ENCODE measurements at regions of chr2 and their contacts with region 1.

Region 1: DNA sequence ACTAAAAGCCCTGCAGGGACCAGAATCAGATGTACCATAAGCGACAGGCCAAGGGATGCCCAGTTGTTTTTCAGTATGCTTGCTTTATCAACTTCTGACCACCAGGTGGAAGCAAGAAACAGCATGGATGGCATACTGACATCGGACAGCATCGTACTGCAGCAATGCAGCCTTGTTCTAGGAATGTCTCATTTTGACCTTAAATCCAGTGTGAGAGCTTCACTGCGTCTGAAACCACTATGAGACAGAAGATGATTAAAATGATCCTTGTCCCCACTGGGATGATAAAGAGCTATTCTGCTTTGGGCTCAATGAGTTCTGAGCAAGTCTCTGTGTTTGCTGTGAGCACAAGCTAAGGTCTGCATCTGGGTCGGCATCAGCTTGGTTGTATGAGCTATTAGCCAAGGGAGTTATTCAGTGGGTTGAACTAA is 54.3 kb downstream of the CDK15 start:
- DNase-seq: peak; percentile 65
- H3K4me3 ChIP-seq: no peak overlapping the region
- H3K27ac ChIP-seq: no peak overlapping the region
- H3K4me1 ChIP-seq: peaks cover 19% of the 10 kb centered on the region
- H3K27me3 ChIP-seq: no peaks in the 10 kb centered on the region
- CTCF ChIP-seq: peak; percentile 86 to 92

Region 2: DNA sequence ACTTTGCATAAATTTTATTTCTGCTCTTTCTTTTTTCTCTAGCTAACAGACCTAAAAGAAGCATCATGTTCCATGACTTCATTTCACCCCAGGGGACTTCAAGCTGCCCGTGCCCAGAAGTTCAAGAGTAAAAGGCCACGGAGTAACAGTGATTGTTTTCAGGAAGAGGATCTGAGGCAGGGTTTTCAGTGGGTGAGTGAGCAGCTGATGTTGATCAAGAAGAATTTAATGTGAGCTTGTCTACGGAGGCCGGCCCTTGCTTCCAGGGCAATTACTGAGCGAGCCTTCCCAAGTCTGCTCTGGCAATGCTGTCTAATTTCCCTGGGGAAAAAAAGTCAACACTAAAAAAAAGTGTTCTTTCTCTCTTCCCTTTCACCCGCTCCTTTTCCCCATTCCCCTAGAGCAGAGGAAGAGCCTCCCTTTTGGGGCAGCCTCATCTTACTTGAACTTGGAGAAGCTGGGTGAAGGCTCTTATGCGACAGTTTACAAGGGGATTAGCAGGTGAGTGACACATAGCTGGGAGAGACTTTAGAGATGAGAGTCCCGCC is 53.1 kb before region 1 on chr2:
- CTCF ChIA-PET with region 1: interaction called, 3 read pairs
- dilution Hi-C with region 1: no loop called
- in situ Hi-C with region 1: loop called in 1 of 2 experiments (anchors 10 kb)
- intact Hi-C with region 1: no loop called
- DNase-seq: no peak
- H3K4me3 ChIP-seq: no peak overlapping the region
- H3K27ac ChIP-seq: no peak overlapping the region
- H3K4me1 ChIP-seq: no peaks in the 10 kb centered on the region
- H3K27me3 ChIP-seq: no peaks in the 10 kb centered on the region
- CTCF ChIP-seq: no peak

Region 3: DNA sequence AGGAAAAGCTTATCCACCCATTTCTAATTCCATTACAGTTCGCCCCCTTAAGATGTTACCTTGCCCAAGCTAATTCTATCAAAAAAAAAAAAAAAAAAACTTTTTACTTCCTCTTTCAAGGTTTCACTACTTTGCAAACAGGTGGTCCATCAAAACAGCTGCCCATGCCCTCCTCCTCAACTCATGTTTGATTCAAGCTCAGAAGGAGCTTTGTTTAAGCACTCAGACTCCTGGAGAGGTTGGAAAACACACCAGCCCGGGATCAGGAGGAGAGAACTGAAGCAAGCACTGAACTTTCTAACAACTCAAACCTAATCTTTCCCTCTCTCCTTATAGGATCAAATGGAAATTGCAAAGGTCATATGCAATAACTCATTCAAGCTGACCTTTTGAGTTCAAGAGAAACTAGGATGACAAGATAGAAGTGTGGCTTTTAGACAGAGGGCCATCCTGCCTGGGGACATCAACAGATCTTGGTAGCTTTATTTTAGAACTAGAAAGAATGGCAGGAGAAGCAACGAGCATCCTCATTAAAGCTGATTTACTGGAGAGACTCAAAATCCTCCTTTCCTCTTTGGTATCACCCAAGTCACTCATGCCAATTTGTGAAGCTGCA is 144.7 kb after region 1 on chr2:
- CTCF ChIA-PET with region 1: no interaction called
- dilution Hi-C with region 1: no loop called
- in situ Hi-C with region 1: no loop called
- intact Hi-C with region 1: no loop called
- DNase-seq: no peak
- H3K4me3 ChIP-seq: no peak overlapping the region
- H3K27ac ChIP-seq: no peak overlapping the region
- H3K4me1 ChIP-seq: no peaks in the 10 kb centered on the region
- H3K27me3 ChIP-seq: no peaks in the 10 kb centered on the region
- CTCF ChIP-seq: no peak

Region 4: GRCh38 chr2:202033321-202034248 is 172.9 kb after region 1 on chr2 and contains the start of gene FZD7:
- CTCF ChIA-PET with region 1: interaction called, 5 read pairs
- dilution Hi-C with region 1: no loop called
- in situ Hi-C with region 1: loop called in 1 of 2 experiments (anchors 10 kb)
- intact Hi-C with region 1: loop called (anchors 1 kb)
- DNase-seq: peak; percentile 90
- H3K4me3 ChIP-seq: peak within 1 kb of the TSS; percentile 63 to 79 (median 71)
- H3K27ac ChIP-seq: peak within 1 kb of the TSS; percentile 80
- H3K4me1 ChIP-seq: peaks cover 32% of the 10 kb centered on the region
- H3K27me3 ChIP-seq: no peaks in the 10 kb centered on the region
- CTCF ChIP-seq: peak in 1 of 2 donors; percentile 37
- total RNA-seq, gene FZD7: 21.6 to 66.5 TPM

Region 5: GRCh38 chr2:202056392-202057010 is 195.8 kb after region 1 on chr2:
- CTCF ChIA-PET with region 1: no interaction called
- dilution Hi-C with region 1: no loop called
- in situ Hi-C with region 1: no loop called
- intact Hi-C with region 1: loop called (anchors 1 kb)
- DNase-seq: no peak
- H3K4me3 ChIP-seq: no peak overlapping the region
- H3K27ac ChIP-seq: no peak overlapping the region
- H3K4me1 ChIP-seq: no peaks in the 10 kb centered on the region
- H3K27me3 ChIP-seq: peaks cover 3% of the 10 kb centered on the region
- CTCF ChIP-seq: peak; percentile 22 to 47

Region 6: GRCh38 chr2:202069170-202070067 is 208.8 kb after region 1 on chr2:
- CTCF ChIA-PET with region 1: no interaction called
- dilution Hi-C with region 1: no loop called
- in situ Hi-C with region 1: no loop called
- intact Hi-C with region 1: no loop called
- DNase-seq: no peak
- H3K4me3 ChIP-seq: no peak overlapping the region
- H3K27ac ChIP-seq: no peak overlapping the region
- H3K4me1 ChIP-seq: peaks cover 1% of the 10 kb centered on the region
- H3K27me3 ChIP-seq: no peaks in the 10 kb centered on the region
- CTCF ChIP-seq: no peak

Region 7: DNA sequence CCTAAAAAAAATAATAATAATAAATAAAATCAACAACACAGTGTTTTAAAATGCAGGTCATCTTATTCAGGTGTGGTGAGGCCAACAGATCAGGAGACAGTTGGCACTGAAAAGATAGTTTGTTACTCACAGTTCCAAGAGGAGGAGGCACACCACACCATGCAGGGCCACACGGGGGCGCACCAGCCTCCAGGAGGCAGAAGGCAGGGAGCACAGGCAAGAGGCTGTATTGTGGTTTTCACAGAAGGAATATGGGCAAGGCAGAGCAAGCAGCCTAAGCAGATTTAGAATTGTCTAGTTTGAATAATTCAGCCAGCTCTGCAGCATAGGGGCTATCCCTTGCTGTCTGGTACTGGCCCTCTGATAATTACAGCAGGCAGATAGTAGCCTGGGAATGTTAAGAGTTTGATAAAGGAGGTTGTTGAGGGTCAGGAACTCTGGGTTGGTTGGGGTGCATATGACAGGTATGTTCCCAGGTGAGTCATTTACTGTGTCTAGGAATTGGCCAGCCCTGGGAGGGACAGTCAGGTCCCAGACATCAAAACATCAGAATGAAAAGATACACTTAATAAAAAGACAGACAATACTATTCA is 243.7 kb after region 1 on chr2:
- CTCF ChIA-PET with region 1: interaction called, 6 read pairs
- dilution Hi-C with region 1: no loop called
- in situ Hi-C with region 1: no loop called
- intact Hi-C with region 1: loop called (anchors 1 kb)
- DNase-seq: peak; percentile 57
- H3K4me3 ChIP-seq: no peak overlapping the region
- H3K27ac ChIP-seq: no peak overlapping the region
- H3K4me1 ChIP-seq: no peaks in the 10 kb centered on the region
- H3K27me3 ChIP-seq: no peaks in the 10 kb centered on the region
- CTCF ChIP-seq: peak; percentile 76 to 79

Region 8: DNA sequence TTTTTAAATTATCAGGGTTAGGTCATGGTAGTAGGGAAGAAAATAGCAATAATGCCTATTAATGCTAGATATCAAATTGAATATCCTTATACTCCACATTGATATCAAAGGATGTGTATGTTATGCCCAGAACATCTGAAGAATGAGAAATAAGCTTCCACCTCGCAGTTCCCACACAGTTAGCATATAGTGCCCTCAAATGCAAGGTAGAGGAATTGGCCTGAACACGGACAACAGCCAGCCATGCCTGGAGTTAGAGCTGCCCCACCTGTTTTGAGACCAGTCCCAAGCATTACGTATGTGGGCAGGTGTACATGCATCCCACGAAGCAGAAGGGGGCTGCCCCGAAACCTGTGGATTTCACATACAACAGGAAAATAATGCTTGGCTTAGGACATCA is 298.1 kb after region 1 on chr2:
- CTCF ChIA-PET with region 1: no interaction called
- dilution Hi-C with region 1: no loop called
- in situ Hi-C with region 1: loop called in 1 of 2 experiments (anchors 25 kb)
- intact Hi-C with region 1: loop called (anchors 1 kb)
- DNase-seq: no peak
- H3K4me3 ChIP-seq: no peak overlapping the region
- H3K27ac ChIP-seq: no peak overlapping the region
- H3K4me1 ChIP-seq: no peaks in the 10 kb centered on the region
- H3K27me3 ChIP-seq: no peaks in the 10 kb centered on the region
- CTCF ChIP-seq: peak in 1 of 2 donors; percentile 52